CD14-positive monocyte (primary cell): ENCODE measurements at regions of chr10 and their contacts with region 1.

Region 1: DNA sequence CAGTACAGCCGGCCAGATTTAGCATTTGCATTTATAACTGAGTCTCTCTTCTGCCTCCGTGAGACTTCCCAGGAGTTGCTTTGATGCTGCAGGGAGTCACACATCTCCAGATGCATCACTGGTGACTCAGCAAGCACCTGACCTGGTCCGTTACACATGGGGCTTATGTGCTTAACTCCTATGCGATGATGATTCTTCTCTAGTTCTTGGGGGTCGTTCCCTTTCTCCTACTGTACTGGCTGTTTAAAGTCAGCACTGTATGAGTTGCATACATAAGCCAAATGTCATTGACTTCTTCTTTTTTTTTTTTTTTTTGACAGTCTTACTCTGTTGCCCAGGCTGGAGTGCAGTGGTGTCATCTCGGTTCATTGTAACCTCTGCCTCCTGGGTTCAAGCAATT is 13.0 kb upstream of the AKR1E2 start:
- DNase-seq: peak; percentile 28 to 82 (median 35)
- H3K4me3 ChIP-seq: no peak overlapping the region
- H3K4me3 Mint-ChIP-seq: no peak overlapping the region
- H3K27ac ChIP-seq: peak overlapping the region in 1 of 2 donors; percentile 50
- H3K27ac Mint-ChIP-seq: peak overlapping the region in 6 of 7 donors; percentile 13 to 78 (median 51)
- H3K4me1 ChIP-seq: peaks cover 35 to 36% of the 10 kb centered on the region in 2 donors
- H3K4me1 Mint-ChIP-seq: peaks cover 35% of the 10 kb centered on the region
- H3K27me3 ChIP-seq: no peaks in the 10 kb centered on the region
- H3K27me3 Mint-ChIP-seq: peaks cover 0 to 3% (median 2%) of the 10 kb centered on the region in 3 donors
- CTCF ChIP-seq: no peak

Region 2: DNA sequence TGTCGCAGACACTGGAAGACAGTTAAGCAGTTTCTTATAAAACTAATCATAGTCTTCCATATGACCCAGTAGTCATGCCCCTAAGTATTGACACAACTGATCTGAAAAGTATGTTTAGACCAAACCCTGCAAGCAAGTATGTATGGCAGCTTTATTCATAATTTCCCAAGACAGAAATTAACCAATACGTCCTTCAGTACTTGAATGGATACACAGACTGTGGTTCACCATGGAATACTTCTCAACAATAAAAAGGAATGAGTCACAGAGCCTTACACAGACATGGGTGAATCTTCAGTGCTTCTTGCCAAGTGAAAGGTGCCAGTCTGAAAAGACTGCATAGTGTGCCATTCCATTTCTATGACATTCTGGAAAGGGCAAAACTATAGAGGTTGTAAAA is 37.2 kb before region 1 on chr10:
- intact Hi-C with region 1: loop called in 1 of 2 experiments (anchors 5 kb)
- DNase-seq: no peak
- H3K4me3 ChIP-seq: no peak overlapping the region
- H3K4me3 Mint-ChIP-seq: no peak overlapping the region
- H3K27ac ChIP-seq: no peak overlapping the region
- H3K27ac Mint-ChIP-seq: no peak overlapping the region
- H3K4me1 ChIP-seq: peaks cover 9% of the 10 kb centered on the region in 2 donors
- H3K4me1 Mint-ChIP-seq: peaks cover 10% of the 10 kb centered on the region
- H3K27me3 ChIP-seq: no peaks in the 10 kb centered on the region
- H3K27me3 Mint-ChIP-seq: peaks cover 0 to 4% (median 4%) of the 10 kb centered on the region in 3 donors
- CTCF ChIP-seq: no peak

Region 3: DNA sequence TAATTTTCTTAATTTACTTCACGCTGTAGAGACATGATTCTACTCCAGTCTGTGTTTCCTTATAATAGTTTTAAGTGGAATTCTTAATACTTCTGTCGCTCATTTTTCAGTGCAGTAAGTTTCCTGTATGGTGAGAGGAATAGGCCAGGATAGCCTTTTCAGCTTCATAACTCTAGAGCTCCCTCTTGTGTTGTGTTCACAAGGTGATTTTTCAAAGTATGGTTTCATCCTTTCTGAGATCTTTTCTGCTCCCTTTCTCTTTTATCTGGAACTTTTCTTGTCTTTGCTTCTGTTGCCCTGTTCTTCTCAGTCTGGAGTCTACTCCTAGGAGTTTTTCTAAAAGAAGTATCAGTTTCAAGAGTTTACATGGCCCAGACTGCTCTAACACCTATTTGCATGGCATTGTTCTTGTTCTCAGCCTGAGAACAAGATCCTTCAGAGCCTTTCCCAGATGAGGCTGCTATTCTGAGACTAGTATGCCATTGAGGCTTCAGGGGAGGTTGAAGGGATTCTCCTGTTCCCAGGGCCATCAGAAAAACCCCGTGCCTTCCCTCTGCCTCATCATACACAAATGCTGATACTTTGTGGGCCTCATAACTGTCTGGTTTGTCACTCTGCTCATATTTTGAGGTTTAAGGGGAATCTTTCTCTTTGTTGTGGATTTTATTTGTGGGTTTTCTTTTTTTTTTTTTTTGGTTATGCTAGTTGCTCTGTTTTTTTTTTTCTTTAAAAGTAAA is 621.2 kb after region 1 on chr10:
- intact Hi-C with region 1: loop called in 1 of 2 experiments (anchors 10 kb)
- DNase-seq: peak in 2 of 3 donors; percentile 33 to 48
- H3K4me3 ChIP-seq: no peak overlapping the region
- H3K4me3 Mint-ChIP-seq: no peak overlapping the region
- H3K27ac ChIP-seq: no peak overlapping the region
- H3K27ac Mint-ChIP-seq: peak overlapping the region in 1 of 7 donors; percentile 37
- H3K4me1 ChIP-seq: no peaks in the 10 kb centered on the region
- H3K4me1 Mint-ChIP-seq: peaks cover 3% of the 10 kb centered on the region
- H3K27me3 ChIP-seq: no peaks in the 10 kb centered on the region
- H3K27me3 Mint-ChIP-seq: no peaks in the 10 kb centered on the region
- CTCF ChIP-seq: peak; percentile 76